GM12878 (cell line): ENCODE measurements at regions of chr12 and their contacts with region 1.

Region 1: DNA sequence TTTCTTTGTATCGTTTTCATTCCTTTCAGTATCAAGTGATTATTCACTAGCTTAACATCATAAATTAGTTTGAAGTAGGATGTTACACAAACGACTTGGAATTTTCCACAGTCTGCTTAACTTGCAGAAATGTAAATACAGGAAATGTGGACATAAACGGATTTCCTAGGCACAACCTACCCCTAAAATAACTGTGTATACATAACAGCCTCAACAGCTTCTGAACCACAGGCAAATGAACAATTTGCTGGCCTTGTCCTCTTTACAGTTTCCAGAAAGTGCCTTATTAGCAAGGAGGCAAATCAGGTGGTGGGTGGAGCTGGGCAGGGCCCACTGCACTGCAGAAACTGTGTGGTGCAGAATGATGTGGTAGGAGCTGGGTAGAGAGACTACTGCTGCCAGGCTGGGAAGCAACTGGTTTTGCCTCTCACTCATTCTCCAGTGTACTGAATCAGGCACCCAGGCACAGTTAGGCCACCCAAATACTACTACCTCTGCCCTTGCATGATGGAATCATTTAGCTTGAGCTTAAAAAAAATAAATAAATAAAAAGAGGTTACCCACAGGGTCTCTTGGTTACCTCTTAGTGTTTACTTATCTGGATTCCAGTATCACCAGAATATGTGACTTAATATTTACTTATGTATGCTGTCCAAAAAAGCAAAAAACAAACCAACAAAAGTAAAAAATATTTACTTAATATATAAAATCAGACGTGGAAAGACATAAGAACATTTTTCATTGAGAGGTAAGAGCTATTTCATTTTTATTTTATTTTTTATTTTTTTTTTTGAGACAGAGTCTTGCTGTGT is 14.3 kb downstream of the DRAM1 start:
- DNase-seq: peak; percentile 75
- ATAC-seq: peak; percentile 92
- H3K4me3 ChIP-seq: 0 out of 2 replicates have a peak overlapping the region, but pooled peaks have one; percentile 25
- H3K27ac ChIP-seq: peak overlapping the region; percentile 41
- H3K4me1 ChIP-seq: peaks cover 11% of the 10 kb centered on the region
- H3K27me3 ChIP-seq: no peaks in the 10 kb centered on the region
- CTCF ChIP-seq: no peak
- EP300 ChIP-seq: no peak
- POLR2A ChIP-seq: peak; percentile 40; the same call in 1 of the 2 replicates
- RAD21 ChIP-seq: no peak

Region 2: DNA sequence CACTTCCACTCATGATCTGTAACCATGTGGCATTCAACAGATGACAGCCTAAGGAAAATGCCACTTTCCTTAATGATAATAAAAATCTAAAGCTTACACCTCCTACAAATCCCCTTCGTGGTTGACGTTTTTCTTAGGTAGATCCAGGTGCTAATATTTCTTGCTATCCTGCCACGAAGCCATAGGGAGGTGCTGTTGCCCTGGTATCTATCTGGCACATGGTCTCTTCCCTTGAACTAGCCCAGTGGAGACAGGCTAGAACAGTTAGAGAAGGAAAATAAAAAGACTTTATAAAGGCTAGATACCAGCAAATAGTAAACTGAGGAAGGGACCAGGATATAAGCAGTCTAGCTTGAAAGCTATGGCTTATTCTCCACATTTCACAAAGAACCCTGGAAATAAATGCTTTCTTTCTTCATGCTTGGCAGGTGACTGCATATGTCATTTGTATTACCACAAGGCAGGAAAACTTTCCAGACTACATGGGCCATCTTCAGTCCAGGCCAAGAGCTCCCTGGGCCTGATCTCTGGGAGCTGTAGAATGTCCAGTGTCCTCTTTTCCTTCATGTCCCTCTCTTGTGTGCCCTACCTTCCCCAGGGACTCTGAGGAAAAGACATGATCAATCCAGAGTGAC is 401.3 kb before region 1 on chr12:
- CTCF ChIA-PET with region 1: no interaction called
- POLR2A ChIA-PET with region 1: no interaction called
- RAD21 ChIA-PET with region 1: no interaction called
- SMC1A ChIA-PET with region 1: no interaction called
- in situ Hi-C with region 1: no loop called
- intact Hi-C with region 1: loop called (anchors 5 kb)
- DNase-seq: no peak
- ATAC-seq: peak; percentile 84
- H3K4me3 ChIP-seq: no peak overlapping the region
- H3K27ac ChIP-seq: no peak overlapping the region
- H3K4me1 ChIP-seq: no peaks in the 10 kb centered on the region
- H3K27me3 ChIP-seq: no peaks in the 10 kb centered on the region
- CTCF ChIP-seq: peak; percentile 44 to 52 (median 51)
- EP300 ChIP-seq: no peak
- POLR2A ChIP-seq: no peak
- RAD21 ChIP-seq: peak; percentile 74

Region 3: DNA sequence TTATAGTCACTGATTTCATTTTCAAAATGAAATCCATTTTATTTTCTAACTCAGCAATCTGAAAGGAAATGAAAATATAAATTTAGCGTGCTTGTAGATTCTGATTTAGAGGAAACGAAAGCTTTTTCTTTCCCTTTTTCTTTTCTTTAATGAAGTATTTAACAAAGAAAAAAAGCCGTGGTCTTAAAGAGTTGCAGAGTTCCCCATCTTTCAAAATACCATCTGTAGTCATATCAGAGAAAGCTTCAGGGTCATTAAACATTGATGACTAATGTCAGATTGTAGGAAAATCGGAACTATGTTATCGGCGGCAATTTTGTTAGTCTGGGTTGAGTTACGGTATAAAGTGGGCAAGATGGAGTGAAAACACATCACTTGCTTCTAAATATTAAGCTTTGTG is 18.0 kb after region 1 on chr12:
- CTCF ChIA-PET with region 1: interaction called, 5 read pairs
- POLR2A ChIA-PET with region 1: interaction called, 8 read pairs
- RAD21 ChIA-PET with region 1: interaction called, 4 read pairs
- SMC1A ChIA-PET with region 1: interaction called, 35 read pairs
- in situ Hi-C with region 1: no loop called
- intact Hi-C with region 1: no loop called
- DNase-seq: no peak
- ATAC-seq: peak; percentile 82
- H3K4me3 ChIP-seq: peak overlapping the region; percentile 43; the same call in 1 of the 2 replicates
- H3K27ac ChIP-seq: peak overlapping the region; percentile 88
- H3K4me1 ChIP-seq: peaks cover 31% of the 10 kb centered on the region
- H3K27me3 ChIP-seq: no peaks in the 10 kb centered on the region
- CTCF ChIP-seq: no peak
- EP300 ChIP-seq: peak in 1 of 2 experiments; percentile 22; a peak in 1 of 4 replicates
- POLR2A ChIP-seq: no peak
- RAD21 ChIP-seq: no peak

Region 4: DNA sequence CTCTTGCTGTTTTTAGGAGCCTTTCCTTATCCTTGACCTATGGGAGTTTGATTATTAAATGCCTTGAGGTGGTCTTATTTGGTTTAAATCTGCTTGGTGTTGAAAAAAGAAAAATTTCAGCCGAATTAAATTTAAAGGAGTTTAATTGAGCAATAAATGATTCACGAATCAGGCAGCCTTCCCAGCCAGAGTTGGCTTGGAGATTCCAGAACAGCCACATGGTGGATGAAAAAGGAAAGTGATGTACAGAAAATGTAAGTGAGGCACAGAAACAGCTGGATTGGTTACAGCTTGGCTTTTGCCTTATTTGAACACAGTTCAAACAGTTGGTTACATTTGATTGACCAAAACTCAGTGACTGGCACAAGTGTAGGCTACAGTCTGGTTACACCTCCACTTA is 100.4 kb after region 1 on chr12:
- CTCF ChIA-PET with region 1: no interaction called
- POLR2A ChIA-PET with region 1: no interaction called
- RAD21 ChIA-PET with region 1: no interaction called
- SMC1A ChIA-PET with region 1: no interaction called
- in situ Hi-C with region 1: no loop called
- intact Hi-C with region 1: no loop called
- DNase-seq: no peak
- ATAC-seq: no peak
- H3K4me3 ChIP-seq: no peak overlapping the region
- H3K27ac ChIP-seq: no peak overlapping the region
- H3K4me1 ChIP-seq: no peaks in the 10 kb centered on the region
- H3K27me3 ChIP-seq: no peaks in the 10 kb centered on the region
- CTCF ChIP-seq: no peak
- EP300 ChIP-seq: no peak
- POLR2A ChIP-seq: no peak
- RAD21 ChIP-seq: no peak